Activated T-helper 2 cell treated with anti-CD3 and anti-CD28 coated beads, Interferon-gamma antibody, Interleukin-2, Interleukin-4, amounts not matched to agents 10 μg/mL and 5 μg/mL and 100 μg/mL, durations not matched to agents 14 hours and 24 hours and 36 hours (primary cell): ENCODE measurements at regions of chr22 and their contacts with region 1.

Region 1: GRCh38 chr22:40922484-40923303 is 28.5 kb upstream of the RBX1 start:
- DNase-seq: no peak
- H3K4me3 Mint-ChIP-seq: no peak overlapping the region
- H3K27ac Mint-ChIP-seq: peak overlapping the region; percentile 65
- H3K4me1 Mint-ChIP-seq: peaks cover 3% of the 10 kb centered on the region
- H3K27me3 Mint-ChIP-seq: no peaks in the 10 kb centered on the region

Region 2: GRCh38 chr22:41117127-41117965 is 194.7 kb after region 1 on chr22:
- intact Hi-C with region 1: no loop called
- DNase-seq: no peak
- H3K4me3 Mint-ChIP-seq: no peak overlapping the region
- H3K27ac Mint-ChIP-seq: no peak overlapping the region
- H3K4me1 Mint-ChIP-seq: peaks cover 11% of the 10 kb centered on the region
- H3K27me3 Mint-ChIP-seq: no peaks in the 10 kb centered on the region

Region 3: GRCh38 chr22:41237707-41238569 is 315.2 kb after region 1 on chr22:
- intact Hi-C with region 1: loop called (anchors 2 kb)
- DNase-seq: peak; percentile 77
- H3K4me3 Mint-ChIP-seq: no peak overlapping the region
- H3K27ac Mint-ChIP-seq: no peak overlapping the region
- H3K4me1 Mint-ChIP-seq: peaks cover 3% of the 10 kb centered on the region
- H3K27me3 Mint-ChIP-seq: peaks cover 2% of the 10 kb centered on the region